A549 (cell line): ENCODE measurements at regions of chr2 and their contacts with region 1.

Region 1: DNA sequence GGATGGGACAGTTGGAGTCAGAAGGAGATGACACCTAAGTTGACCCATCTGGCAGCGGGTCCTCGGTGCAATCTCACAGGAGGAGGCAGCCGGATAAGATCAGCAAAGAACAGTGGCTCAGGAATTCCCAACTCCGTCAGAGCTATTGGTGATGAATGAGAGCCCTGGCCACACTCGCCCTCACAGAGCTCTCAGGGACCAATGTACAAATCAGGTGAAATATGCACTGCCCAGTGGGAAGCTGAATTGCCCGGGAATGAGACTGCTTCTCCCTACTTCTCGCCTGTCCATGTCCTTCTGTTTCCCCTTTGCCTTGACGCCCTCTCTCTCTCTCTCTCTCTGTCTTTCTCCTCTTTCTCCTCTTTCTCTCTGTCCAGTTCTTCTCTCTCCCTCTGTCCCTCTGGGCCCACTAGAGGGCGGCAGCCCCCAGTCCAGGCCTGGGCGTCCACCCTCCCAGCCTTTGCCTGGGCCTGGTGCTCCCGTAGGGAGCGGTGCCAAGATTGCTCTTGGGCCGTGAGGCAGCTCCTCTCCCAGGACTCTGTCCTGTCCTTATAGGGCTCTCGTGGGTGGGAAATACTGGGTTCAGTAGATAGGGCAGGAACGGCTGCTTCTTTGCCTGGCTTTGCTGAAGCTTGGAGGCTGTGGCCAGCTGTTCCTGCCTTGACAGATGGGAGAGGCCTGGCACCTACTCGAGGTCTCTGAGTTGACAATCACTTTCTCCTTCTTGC is 28.3 kb upstream of the PUM2 start:
- DNase-seq: peak; percentile 77 to 78
- ATAC-seq: peak; percentile 98 to 99
- H3K4me3 ChIP-seq: no peak overlapping the region
- H3K27ac ChIP-seq: peak overlapping the region; percentile 23 to 58; a peak in 4 of 6 replicates
- H3K4me1 ChIP-seq: peaks cover 10% of the 10 kb centered on the region; the same call in 1 of the 3 replicates
- CTCF ChIP-seq: peak; percentile 80
- EP300 ChIP-seq: no peak
- POLR2A ChIP-seq: no peak
- RAD21 ChIP-seq: peak; percentile 80 to 85

Region 2: GRCh38 chr2:19911799-19912509 is 467.0 kb before region 1 on chr2:
- CTCF ChIA-PET with region 1: no interaction called
- POLR2A ChIA-PET with region 1: no interaction called
- DNase-seq: peak; percentile 31 to 35
- ATAC-seq: peak; percentile 69 to 74
- H3K4me3 ChIP-seq: no peak overlapping the region
- H3K27ac ChIP-seq: peak overlapping the region; percentile 32 to 41; a peak in 3 of 6 replicates
- H3K4me1 ChIP-seq: peaks cover 16% of the 10 kb centered on the region
- CTCF ChIP-seq: no peak
- EP300 ChIP-seq: no peak
- POLR2A ChIP-seq: no peak
- RAD21 ChIP-seq: no peak

Region 3: DNA sequence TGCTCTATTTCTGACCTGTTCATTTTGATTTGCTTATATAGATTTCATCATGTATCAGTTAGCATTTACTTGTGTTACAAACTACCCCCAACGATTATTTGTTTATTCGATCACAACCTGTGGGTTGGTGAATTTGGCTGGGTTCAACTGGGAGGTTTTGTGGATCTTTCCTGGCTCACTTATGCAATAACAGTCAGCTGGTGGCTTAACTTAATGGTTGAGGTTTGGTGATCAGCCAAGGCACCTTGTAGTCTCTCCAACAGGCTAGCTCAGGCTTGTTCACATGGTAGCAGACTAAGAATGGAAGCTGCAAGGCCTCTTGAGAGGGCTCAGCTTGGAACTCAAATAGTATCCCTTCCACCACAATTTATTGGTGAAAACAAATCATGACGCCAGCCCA is 22.9 kb before region 1 on chr2:
- CTCF ChIA-PET with region 1: interaction called, 13 read pairs
- POLR2A ChIA-PET with region 1: no interaction called
- DNase-seq: no peak
- ATAC-seq: no peak
- H3K4me3 ChIP-seq: no peak overlapping the region
- H3K27ac ChIP-seq: no peak overlapping the region
- H3K4me1 ChIP-seq: peaks cover 9% of the 10 kb centered on the region
- CTCF ChIP-seq: no peak
- EP300 ChIP-seq: no peak
- POLR2A ChIP-seq: no peak
- RAD21 ChIP-seq: no peak

Region 4: DNA sequence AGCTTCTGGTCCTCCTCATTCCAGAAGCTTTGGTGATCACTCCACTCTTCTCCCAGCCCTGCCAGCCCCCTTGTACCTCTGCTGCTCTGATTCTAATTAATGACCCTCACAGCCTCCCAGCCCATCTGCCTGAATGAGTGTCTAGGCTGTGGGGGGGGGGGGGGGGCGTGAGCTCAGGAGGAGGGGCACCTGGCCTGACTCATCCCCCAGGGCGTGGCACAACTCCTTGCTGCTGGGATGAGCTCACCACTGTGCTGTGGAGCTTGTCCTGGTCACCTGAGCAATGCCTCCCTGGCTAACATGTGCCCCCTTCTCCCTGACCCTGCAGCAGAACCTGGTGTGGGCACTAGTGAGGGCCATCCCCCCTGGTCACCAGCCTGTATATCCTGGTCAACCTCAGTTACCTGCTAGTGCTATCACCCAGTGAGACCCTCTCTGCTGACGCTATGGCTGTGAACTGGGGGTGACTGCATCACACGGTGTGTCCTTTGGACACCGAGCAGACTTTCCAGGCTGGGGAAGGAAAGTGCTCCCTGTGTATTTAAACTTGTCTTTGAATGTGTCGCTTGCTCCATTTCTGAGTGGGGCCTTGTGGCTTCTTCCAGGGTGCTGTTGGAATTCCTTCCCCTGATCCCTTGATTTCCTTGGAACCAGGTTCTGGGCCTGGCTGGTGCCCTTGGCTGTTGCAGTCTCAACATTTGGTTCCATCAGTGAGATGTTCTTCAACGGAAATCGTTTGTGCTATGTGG is 13.2 kb after region 1 on chr2:
- CTCF ChIA-PET with region 1: interaction called, 34 read pairs
- POLR2A ChIA-PET with region 1: no interaction called
- DNase-seq: peak; percentile 34 to 44
- ATAC-seq: peak; percentile 26 to 37; a peak in 3 of 6 replicates
- H3K4me3 ChIP-seq: no peak overlapping the region
- H3K27ac ChIP-seq: no peak overlapping the region
- H3K4me1 ChIP-seq: no peaks in the 10 kb centered on the region
- CTCF ChIP-seq: no peak
- EP300 ChIP-seq: no peak
- POLR2A ChIP-seq: no peak
- RAD21 ChIP-seq: no peak

Region 5: GRCh38 chr2:20404950-20405349 is 26.0 kb after region 1 on chr2:
- CTCF ChIA-PET with region 1: interaction called, 32 read pairs
- POLR2A ChIA-PET with region 1: no interaction called
- DNase-seq: no peak
- ATAC-seq: no peak
- H3K4me3 ChIP-seq: no peak overlapping the region
- H3K27ac ChIP-seq: no peak overlapping the region
- H3K4me1 ChIP-seq: no peaks in the 10 kb centered on the region
- CTCF ChIP-seq: no peak
- EP300 ChIP-seq: no peak
- POLR2A ChIP-seq: no peak
- RAD21 ChIP-seq: no peak

Region 6: DNA sequence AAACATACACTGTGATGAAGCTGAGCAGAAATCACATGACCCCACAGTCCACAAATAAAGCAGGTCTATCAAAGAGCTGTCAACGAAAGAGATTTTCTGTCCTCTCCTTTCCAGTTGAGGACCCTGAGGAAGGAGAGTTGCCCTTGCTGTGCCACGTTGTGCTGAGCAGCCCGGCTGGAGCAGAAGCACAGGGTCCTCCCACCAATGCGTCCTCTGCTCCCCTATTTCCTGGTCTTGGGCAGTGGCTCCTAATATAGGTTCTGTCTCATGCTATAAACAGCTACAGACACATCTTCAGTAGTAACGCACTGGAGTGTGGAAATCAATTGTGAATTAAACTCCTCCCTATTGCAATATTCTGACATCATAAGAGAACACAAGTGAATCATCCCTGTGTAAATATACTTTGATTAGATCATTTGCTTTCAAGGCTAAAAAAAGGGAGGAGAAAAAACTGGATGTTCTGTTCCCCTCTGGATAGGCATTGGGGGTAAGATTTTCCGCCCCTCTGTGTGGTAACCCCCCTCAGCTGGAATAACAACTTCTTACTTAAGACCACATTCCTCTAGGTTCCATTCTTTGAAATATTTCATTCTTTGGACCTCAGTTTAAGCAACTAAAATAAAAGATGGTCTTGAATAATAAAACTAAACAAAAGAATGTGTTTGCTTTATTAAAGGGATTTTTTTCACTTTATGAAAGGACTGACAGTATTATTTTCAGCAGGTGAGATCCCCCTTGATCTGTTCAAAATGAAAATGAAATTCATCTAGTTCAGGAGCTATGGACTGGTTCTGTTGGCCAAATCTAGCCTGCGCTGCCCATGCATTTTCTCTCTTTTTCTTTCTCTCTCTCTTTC is 59.6 kb after region 1 on chr2:
- CTCF ChIA-PET with region 1: interaction called, 40 read pairs
- POLR2A ChIA-PET with region 1: no interaction called
- DNase-seq: peak; percentile 78 to 91
- ATAC-seq: peak; percentile 80 to 86
- H3K4me3 ChIP-seq: peak overlapping the region; percentile 35
- H3K27ac ChIP-seq: peak overlapping the region; percentile 79 to 87
- H3K4me1 ChIP-seq: peaks cover 38% of the 10 kb centered on the region
- CTCF ChIP-seq: no peak
- EP300 ChIP-seq: peak; percentile 76 to 88; a peak in 2 of 5 replicates
- POLR2A ChIP-seq: no peak
- RAD21 ChIP-seq: no peak

Region 7: GRCh38 chr2:20635675-20636584 is 257.0 kb after region 1 on chr2:
- CTCF ChIA-PET with region 1: interaction called, 105 read pairs
- POLR2A ChIA-PET with region 1: no interaction called
- DNase-seq: peak; percentile 78 to 87
- ATAC-seq: peak; percentile 90 to 98
- H3K4me3 ChIP-seq: no peak overlapping the region
- H3K27ac ChIP-seq: peak overlapping the region; percentile 50 to 75; a peak in 4 of 6 replicates
- H3K4me1 ChIP-seq: peaks cover 21% of the 10 kb centered on the region
- CTCF ChIP-seq: peak; percentile 97
- EP300 ChIP-seq: no peak
- POLR2A ChIP-seq: no peak
- RAD21 ChIP-seq: peak; percentile 100